ENCODE measurements at regions of chr6 and their contacts with region 1.

Region 1: GRCh38 chr6:90610751-90611542 is 24.1 kb upstream of the MAP3K7 start:
- DNase-seq: peak; percentile 8 to 68 (median 44)

Region 2: DNA sequence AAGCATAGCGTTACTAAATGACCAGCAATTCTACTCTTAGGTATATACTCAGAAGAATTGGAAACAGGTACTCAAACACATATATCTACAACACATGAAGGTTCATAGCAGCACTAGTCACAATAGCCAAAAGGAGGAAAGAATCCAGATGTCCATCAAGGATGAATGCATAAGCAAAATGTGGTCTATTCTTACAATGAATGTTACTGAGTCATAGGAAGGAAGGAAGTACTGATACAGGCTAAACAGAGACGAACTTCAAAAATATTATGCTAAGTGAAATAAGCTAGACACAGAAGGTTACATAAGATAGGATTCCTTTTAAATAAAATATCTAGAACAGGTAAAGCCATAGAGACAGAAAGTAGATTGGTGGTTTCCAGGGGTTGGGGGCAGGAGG is 117.6 kb before region 1 on chr6:
- intact Hi-C with region 1: no loop called
- DNase-seq: no peak

Region 3: DNA sequence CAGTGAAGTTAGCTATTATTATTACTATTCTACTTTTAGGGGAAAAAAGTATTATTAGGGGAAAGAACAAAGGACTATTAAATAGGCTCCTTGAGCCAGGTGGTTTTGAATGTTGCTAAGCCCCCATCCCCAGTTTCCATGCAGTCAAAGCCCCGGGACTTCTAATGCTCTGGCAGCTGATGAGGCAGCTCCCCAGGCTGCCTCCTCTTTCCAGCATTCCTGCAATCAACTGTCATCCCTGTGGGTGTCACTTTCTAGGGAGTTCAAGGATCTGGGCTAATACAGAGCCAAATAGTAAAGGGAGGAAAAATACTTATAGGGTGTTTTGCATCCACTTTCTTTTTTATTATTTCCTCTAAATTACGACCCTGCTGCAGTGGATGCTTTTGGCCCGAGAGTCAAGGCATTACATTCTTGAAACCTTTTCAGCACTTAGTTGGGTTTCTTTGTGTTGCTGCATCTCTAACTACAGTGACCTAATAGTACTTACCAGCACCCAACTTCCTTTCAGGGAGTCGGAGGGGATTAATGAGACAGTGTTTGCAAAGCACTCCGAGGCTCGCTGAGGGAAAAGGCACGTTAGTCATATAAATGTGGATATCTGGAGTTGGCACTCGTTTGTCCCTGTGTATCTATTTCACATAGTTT is 279.9 kb after region 1 on chr6:
- intact Hi-C with region 1: loop called (anchors 10 kb)
- DNase-seq: peak in 12 of 42 donors; percentile 18 to 61 (median 32)

Measured in head of caudate nucleus (tissue), 42 donors.